CD4-positive, alpha-beta T cell (primary cell): ENCODE measurements at regions of chr17 and their contacts with region 1.

Region 1: DNA sequence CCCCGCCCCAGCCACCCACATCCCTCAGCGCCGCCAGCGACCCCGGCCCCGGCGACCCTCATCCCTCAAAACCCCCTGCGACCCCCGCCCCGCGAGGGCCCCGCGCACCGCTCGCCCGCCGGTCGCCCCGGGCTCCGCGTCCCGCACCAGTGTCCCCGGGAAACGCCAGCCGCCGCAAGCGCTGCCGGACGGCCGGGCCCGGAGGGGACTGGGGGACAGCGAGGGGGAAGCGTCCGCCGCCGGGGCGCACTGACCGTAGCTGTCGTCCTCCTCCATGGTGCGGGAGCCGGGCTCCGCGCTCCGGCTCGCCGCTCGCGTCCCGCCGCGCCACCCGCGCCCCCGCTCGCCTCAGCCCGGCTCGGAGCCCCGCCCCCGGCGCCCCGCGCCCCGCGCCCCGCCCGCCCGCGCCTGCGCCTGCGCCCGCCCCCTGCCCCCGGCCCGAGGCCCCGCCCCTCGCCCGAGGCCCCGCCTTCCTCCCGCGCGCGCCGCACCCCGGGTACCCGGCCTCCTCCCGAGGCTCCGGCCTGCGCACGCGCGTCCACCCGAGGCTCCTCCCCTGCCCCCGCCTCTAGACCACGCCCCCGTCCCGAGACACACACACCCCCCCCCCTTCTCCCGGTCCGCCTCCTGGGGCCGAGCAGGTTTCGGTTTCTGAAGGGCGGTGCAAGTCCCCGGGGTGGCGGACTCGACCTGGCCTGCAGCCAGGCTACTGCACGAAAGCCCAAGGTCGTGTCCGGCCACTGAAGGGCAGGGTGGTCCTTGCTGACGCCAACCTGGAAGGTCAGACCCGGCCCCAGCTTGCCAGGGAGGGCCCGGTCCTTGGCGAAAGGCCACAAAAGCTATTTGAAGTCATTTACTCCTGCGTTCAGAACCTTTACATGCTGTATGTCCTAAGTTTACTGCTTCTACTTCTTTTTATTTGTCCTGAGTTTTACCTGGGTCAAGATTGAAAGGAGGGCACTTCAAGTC is at the start of gene CYTH1:
- DNase-seq: peak; percentile 96 to 100 (median 99)
- ATAC-seq: peak; percentile 67
- H3K4me3 ChIP-seq: peak within 1 kb of the TSS; percentile 93
- H3K4me3 Mint-ChIP-seq: peak within 1 kb of the TSS; percentile 96
- H3K27ac ChIP-seq: peak within 1 kb of the TSS; percentile 88 to 97
- H3K27ac Mint-ChIP-seq: peak within 1 kb of the TSS; percentile 95
- H3K4me1 ChIP-seq: peaks cover 74% of the 10 kb centered on the region
- H3K4me1 Mint-ChIP-seq: peaks cover 62% of the 10 kb centered on the region
- H3K27me3 ChIP-seq: no peaks in the 10 kb centered on the region
- H3K27me3 Mint-ChIP-seq: no peaks in the 10 kb centered on the region
- CTCF ChIP-seq: no peak
- total RNA-seq, gene CYTH1: 521 to 525 TPM

Region 2: GRCh38 chr17:78736526-78737079 is 45.6 kb before region 1 on chr17:
- CTCF ChIA-PET with region 1: interaction called, 7 read pairs
- POLR2A ChIA-PET with region 1: interaction called, 31 read pairs
- intact Hi-C with region 1: loop called in 1 of 2 experiments (anchors 5 kb)
- DNase-seq: peak; percentile 36 to 89 (median 66)
- ATAC-seq: peak; percentile 86
- H3K4me3 ChIP-seq: peak overlapping the region; percentile 66
- H3K4me3 Mint-ChIP-seq: peak overlapping the region; percentile 96
- H3K27ac ChIP-seq: peak overlapping the region; percentile 66 to 80
- H3K27ac Mint-ChIP-seq: peak overlapping the region; percentile 90
- H3K4me1 ChIP-seq: peaks cover 79% of the 10 kb centered on the region
- H3K4me1 Mint-ChIP-seq: peaks cover 92% of the 10 kb centered on the region
- H3K27me3 ChIP-seq: no peaks in the 10 kb centered on the region
- H3K27me3 Mint-ChIP-seq: no peaks in the 10 kb centered on the region
- CTCF ChIP-seq: peak; percentile 23

Region 3: DNA sequence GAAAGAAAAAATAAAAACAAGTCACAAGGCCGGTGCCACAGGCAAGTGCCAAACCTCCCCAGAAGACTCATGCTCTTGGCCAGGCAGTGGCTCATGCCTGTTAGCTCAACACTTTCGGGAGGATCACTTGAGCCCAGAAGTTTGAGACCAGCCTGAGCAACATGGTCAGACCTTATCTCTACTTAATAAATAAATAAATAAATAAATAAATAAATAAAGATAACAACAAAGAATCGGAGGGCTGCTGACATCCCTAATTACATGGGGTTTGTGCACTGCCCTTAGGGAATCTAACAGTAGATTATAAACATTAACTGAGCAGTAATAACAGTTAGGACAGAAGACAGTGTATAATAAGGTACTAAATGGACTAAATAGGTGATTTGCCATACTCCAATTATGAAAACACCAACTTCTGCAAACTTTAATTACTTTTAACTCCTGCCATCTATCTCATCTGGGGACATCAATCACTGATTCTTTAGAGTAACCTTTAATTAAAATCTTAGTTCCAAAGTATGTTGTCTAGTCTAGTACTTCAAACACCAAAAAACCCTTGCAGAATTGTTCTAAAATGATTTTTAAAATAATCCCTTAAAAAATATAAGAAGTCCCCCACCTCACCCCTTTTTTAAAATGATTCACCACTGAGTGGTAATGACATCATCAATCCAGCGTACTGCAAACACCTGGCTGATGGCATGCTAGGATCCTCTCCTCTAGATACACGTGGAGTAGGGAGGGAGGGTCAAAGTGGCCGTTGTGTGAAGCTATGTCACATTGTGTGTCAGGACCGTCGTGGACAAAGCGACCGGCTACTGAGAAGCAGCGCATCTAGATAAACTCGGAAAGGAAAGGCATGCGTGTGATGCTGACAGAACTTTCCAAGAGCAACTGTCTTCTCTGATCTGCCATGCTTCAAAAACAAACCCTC is 28.6 kb before region 1 on chr17:
- CTCF ChIA-PET with region 1: interaction called, 4 read pairs
- POLR2A ChIA-PET with region 1: interaction called, 60 read pairs
- intact Hi-C with region 1: loop called in 1 of 2 experiments (anchors 1 kb)
- DNase-seq: peak in 6 of 14 experiments; percentile 34 to 78 (median 50)
- ATAC-seq: peak; percentile 47
- H3K4me3 ChIP-seq: no peak overlapping the region
- H3K4me3 Mint-ChIP-seq: peak overlapping the region; percentile 86
- H3K27ac ChIP-seq: peak overlapping the region; percentile 28 to 69
- H3K27ac Mint-ChIP-seq: peak overlapping the region; percentile 87
- H3K4me1 ChIP-seq: peaks cover 96% of the 10 kb centered on the region
- H3K4me1 Mint-ChIP-seq: peaks cover 87% of the 10 kb centered on the region
- H3K27me3 ChIP-seq: no peaks in the 10 kb centered on the region
- H3K27me3 Mint-ChIP-seq: no peaks in the 10 kb centered on the region
- CTCF ChIP-seq: no peak

Region 4: GRCh38 chr17:78798695-78799559 is 16.7 kb after region 1 on chr17:
- CTCF ChIA-PET with region 1: interaction called, 4 read pairs
- POLR2A ChIA-PET with region 1: interaction called, 38 read pairs
- intact Hi-C with region 1: loop called (anchors 1 to 2 kb)
- DNase-seq: peak in 5 of 14 experiments; percentile 29 to 72 (median 68)
- ATAC-seq: peak; percentile 29
- H3K4me3 ChIP-seq: no peak overlapping the region
- H3K4me3 Mint-ChIP-seq: peak overlapping the region; percentile 71
- H3K27ac ChIP-seq: no peak overlapping the region
- H3K27ac Mint-ChIP-seq: peak overlapping the region; percentile 97
- H3K4me1 ChIP-seq: peaks cover 60% of the 10 kb centered on the region
- H3K4me1 Mint-ChIP-seq: peaks cover 80% of the 10 kb centered on the region
- H3K27me3 ChIP-seq: no peaks in the 10 kb centered on the region
- H3K27me3 Mint-ChIP-seq: no peaks in the 10 kb centered on the region
- CTCF ChIP-seq: peak; percentile 71

Region 5: DNA sequence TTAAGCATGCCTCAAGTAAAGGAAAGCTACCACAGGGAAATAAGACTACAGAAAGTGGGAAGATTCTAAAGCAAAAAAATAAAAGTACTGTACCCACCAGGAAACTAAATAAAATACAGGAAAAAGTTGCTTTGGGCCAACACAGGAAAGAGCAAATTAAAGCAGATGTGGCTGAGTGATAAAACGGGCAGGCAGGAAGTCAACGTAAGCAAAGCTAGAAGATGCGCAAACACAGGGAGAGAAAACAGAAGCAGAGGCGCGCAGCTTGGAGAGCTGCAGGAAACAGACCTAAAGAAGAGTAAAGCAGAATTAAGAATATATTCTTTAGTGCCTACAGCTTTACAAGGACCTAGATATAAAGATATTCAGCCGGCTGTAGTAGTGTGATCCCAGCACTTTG is 36.7 kb after region 1 on chr17:
- CTCF ChIA-PET with region 1: interaction called, 7 read pairs
- POLR2A ChIA-PET with region 1: interaction called, 21 read pairs
- intact Hi-C with region 1: loop called (anchors 1 to 5 kb)
- DNase-seq: peak in 13 of 14 experiments; percentile 40 to 88 (median 62)
- ATAC-seq: peak; percentile 59
- H3K4me3 ChIP-seq: peak overlapping the region; percentile 3
- H3K4me3 Mint-ChIP-seq: peak overlapping the region; percentile 71
- H3K27ac ChIP-seq: peak overlapping the region; percentile 76 to 79
- H3K27ac Mint-ChIP-seq: peak overlapping the region; percentile 91
- H3K4me1 ChIP-seq: peaks cover 59% of the 10 kb centered on the region
- H3K4me1 Mint-ChIP-seq: peaks cover 66% of the 10 kb centered on the region
- H3K27me3 ChIP-seq: no peaks in the 10 kb centered on the region
- H3K27me3 Mint-ChIP-seq: no peaks in the 10 kb centered on the region
- CTCF ChIP-seq: no peak